ENCODE measurements at regions of chr10 and their contacts with region 1.

Region 1: DNA sequence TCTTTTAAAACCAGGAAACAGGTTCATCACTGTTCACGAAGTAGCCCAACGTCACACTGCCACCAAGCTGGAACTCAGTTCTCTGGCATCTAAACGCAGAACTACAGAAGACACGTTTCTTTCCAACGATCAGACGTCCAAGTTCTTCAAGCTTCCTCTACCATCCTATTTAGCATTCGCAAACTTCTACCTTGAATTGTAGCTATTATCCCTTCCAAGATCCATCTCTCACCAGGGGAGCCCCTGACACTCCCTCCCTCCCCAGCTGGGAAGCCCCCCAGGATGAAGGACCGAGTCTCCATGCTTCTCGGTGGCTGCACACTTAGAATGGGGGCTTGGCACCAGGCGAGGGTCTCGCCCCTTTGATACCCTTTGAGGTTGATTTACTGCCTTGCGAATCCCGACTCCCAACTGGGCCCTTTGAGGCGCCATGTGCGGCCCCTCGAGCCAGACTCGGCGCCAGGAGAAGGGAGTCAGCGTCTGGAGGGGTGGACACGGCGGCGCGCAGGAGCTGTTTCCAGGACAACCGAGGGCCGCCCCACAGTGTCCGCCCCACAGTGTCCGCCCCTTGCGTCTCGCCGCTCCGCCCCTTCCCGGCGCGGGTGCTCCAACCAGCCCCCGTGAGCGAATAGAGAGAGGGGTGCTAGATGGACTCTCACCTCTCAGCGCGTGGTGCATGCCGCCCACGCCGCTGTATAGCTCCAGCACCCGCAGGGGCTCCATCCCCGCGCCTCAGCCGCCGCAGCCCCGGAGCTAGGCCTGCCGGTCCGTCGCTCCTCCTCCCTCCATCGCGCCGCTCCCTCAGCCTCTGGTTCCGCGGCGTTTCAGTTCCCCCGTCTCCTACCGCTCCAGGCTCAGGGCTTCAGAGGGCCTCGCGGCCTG is at the start of gene TRDMT1:
- DNase-seq: peak; percentile 83
- ATAC-seq: peak; percentile 93
- H3K4me3 Mint-ChIP-seq: peak within 1 kb of the TSS; percentile 86
- H3K27ac Mint-ChIP-seq: peak within 1 kb of the TSS; percentile 83
- H3K4me1 Mint-ChIP-seq: peaks cover 54% of the 10 kb centered on the region
- H3K27me3 Mint-ChIP-seq: no peaks in the 10 kb centered on the region
- total RNA-seq, gene TRDMT1: 11.6 to 13.6 TPM

Region 2: DNA sequence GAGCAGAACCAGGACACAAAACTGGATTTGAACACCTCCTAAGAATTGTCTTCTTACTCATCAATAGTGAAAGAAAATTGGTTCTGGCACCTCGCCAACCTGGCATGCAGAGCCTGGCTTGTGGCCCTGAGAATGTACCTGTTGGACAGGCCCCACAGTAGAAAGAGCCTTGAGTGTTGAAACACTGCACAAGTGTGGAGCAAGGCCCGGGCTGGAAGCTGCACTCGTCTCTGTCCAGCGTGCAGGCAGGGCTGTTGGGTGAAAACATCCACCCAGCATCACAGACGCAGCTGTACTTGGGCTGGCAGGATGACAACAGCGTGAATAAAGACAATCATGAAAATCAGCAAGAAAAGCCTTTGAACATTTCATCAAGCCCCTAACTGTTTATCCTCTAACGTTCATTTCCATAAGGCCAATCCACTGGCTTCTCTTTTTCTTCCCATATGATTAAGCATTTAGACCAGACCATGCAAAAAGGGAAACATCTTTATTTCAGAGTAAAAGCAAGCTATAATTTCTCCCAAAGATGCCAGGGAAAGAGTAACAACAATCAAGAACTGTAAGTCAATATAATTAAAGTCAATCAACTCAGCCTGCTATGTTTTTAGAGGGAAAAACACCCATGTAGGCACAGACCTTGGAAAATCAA is 87.1 kb before region 1 on chr10:
- CTCF ChIA-PET with region 1: no interaction called
- POLR2A ChIA-PET with region 1: no interaction called
- DNase-seq: no peak
- ATAC-seq: no peak
- H3K4me3 Mint-ChIP-seq: no peak overlapping the region
- H3K27ac Mint-ChIP-seq: no peak overlapping the region
- H3K4me1 Mint-ChIP-seq: peaks cover 19% of the 10 kb centered on the region
- H3K27me3 Mint-ChIP-seq: no peaks in the 10 kb centered on the region

Region 3: GRCh38 chr10:17181758-17182157 is 19.4 kb before region 1 on chr10:
- CTCF ChIA-PET with region 1: interaction called, 16 read pairs
- POLR2A ChIA-PET with region 1: no interaction called
- DNase-seq: no peak
- ATAC-seq: no peak
- H3K4me3 Mint-ChIP-seq: no peak overlapping the region
- H3K27ac Mint-ChIP-seq: no peak overlapping the region
- H3K4me1 Mint-ChIP-seq: no peaks in the 10 kb centered on the region
- H3K27me3 Mint-ChIP-seq: no peaks in the 10 kb centered on the region

Region 4: GRCh38 chr10:17216217-17216900 is 15.2 kb after region 1 on chr10:
- CTCF ChIA-PET with region 1: interaction called, 13 read pairs
- POLR2A ChIA-PET with region 1: interaction called, 14 read pairs
- DNase-seq: peak; percentile 67
- ATAC-seq: peak; percentile 97
- H3K4me3 Mint-ChIP-seq: peak overlapping the region; percentile 44
- H3K27ac Mint-ChIP-seq: peak overlapping the region; percentile 86
- H3K4me1 Mint-ChIP-seq: peaks cover 52% of the 10 kb centered on the region
- H3K27me3 Mint-ChIP-seq: no peaks in the 10 kb centered on the region